Dorsolateral prefrontal cortex (tissue), 120 donors: ENCODE measurements at regions of chrX and their contacts with region 1.

Region 1: GRCh38 chrX:45186643-45187026 is 14.0 kb downstream of the DIPK2B start:
- DNase-seq: no peak
- H3K4me3 ChIP-seq: peak overlapping the region in 52 of 59 donors; percentile 0 to 72 (median 51)
- H3K27ac ChIP-seq: peak overlapping the region in 58 of 59 donors; percentile 69 to 98 (median 91)
- H3K27me3 ChIP-seq: peaks cover 0 to 31% (median 0%) of the 10 kb centered on the region in 45 donors
- CTCF ChIP-seq: no peak

Region 2: DNA sequence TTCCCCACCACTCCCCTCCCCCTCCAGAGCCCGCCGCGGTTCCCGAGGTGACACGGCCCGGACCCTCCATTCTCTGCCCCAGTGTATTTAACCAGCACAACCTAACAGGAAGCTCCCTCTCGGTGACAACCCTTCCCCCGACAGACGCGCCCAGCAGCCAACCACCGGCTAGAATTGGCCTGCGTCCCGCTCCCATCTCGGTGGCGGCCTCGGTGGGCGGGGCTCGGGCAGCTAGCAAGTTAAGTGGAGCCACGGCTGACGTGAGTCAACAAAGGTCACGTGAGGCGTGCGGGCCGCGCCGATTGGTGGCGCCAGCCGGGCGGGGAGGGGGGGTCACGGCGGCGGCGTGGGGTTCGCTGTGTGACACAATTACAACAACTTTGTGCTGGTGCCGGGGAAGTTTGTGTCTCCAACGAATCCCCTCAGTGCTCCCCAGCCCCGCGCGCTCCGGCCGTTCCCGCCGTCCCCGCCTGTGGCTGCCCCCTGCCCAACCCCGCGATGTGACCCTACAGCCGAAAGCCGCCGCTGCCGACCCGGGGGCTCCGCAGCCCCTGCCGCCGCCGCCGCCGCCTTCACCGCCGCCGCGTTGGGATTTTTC is 313.7 kb before region 1 on chrX and contains the start of gene KDM6A:
- intact Hi-C with region 1: loop called (anchors 1 to 2 kb)
- DNase-seq: peak; percentile 99 to 100 (median 100)
- H3K4me3 ChIP-seq: peak within 1 kb of the TSS; percentile 56 to 98 (median 91)
- H3K27ac ChIP-seq: peak within 1 kb of the TSS; percentile 87 to 100 (median 98)
- H3K27me3 ChIP-seq: no peaks in the 10 kb centered on the region
- CTCF ChIP-seq: peak in 3 of 56 donors; percentile 3 to 19 (median 10)
- total RNA-seq, gene KDM6A: 18.4 to 72.2 (median 34.4) TPM

Region 3: GRCh38 chrX:45070116-45071007 is 116.3 kb before region 1 on chrX:
- intact Hi-C with region 1: loop called in 1 of 2 experiments (anchors 10 kb)
- DNase-seq: peak in 1 of 10 donors; percentile 15
- H3K4me3 ChIP-seq: no peak overlapping the region
- H3K27ac ChIP-seq: peak overlapping the region in 39 of 59 donors; percentile 0 to 80 (median 49)
- H3K27me3 ChIP-seq: no peaks in the 10 kb centered on the region
- CTCF ChIP-seq: peak; percentile 22 to 80 (median 69)

Region 4: DNA sequence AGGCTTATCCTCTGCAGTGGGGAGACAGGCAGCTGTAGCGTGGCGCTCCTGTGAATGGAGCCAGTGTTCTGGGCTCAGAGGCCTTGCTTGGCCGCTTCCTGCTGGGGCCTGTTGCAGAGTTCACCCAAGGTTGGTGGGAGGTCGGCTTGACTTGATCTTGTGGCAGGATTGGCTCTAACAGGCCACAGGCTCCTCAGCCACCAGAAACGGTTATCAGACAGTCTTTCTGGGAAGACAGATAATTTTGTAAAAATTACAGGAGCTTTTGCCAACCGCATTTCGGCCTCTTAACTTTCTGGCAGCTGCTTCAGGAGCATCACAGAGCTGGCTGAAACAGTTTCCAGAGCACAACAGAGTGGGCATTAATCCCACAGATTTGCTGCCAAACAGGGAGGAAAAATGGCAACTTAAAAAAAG is 52.3 kb before region 1 on chrX:
- intact Hi-C with region 1: loop called (anchors 2 to 5 kb)
- DNase-seq: peak; percentile 34 to 89 (median 84)
- H3K4me3 ChIP-seq: peak overlapping the region in 12 of 59 donors; percentile 0 to 31 (median 18)
- H3K27ac ChIP-seq: peak overlapping the region in 57 of 59 donors; percentile 58 to 95 (median 87)
- H3K27me3 ChIP-seq: peaks cover 0 to 10% (median 0%) of the 10 kb centered on the region in 45 donors
- CTCF ChIP-seq: peak in 13 of 56 donors; percentile 5 to 43 (median 23)

Region 5: GRCh38 chrX:45142185-45142584 is 44.5 kb before region 1 on chrX:
- intact Hi-C with region 1: loop called (anchors 2 kb)
- DNase-seq: no peak
- H3K4me3 ChIP-seq: no peak overlapping the region
- H3K27ac ChIP-seq: peak overlapping the region in 58 of 59 donors; percentile 65 to 100 (median 95)
- H3K27me3 ChIP-seq: peaks cover 0 to 21% (median 0%) of the 10 kb centered on the region in 45 donors
- CTCF ChIP-seq: no peak

Region 6: GRCh38 chrX:45322382-45322781 is 135.7 kb after region 1 on chrX:
- intact Hi-C with region 1: no loop called
- DNase-seq: peak in 3 of 10 donors; percentile 5 to 30 (median 26)
- H3K4me3 ChIP-seq: no peak overlapping the region
- H3K27ac ChIP-seq: no peak overlapping the region
- H3K27me3 ChIP-seq: peaks cover 0 to 83% (median 23%) of the 10 kb centered on the region in 45 donors
- CTCF ChIP-seq: peak in 54 of 56 donors; percentile 25 to 75 (median 53)